ENCODE measurements at regions of chr19 and their contacts with region 1.

Region 1: DNA sequence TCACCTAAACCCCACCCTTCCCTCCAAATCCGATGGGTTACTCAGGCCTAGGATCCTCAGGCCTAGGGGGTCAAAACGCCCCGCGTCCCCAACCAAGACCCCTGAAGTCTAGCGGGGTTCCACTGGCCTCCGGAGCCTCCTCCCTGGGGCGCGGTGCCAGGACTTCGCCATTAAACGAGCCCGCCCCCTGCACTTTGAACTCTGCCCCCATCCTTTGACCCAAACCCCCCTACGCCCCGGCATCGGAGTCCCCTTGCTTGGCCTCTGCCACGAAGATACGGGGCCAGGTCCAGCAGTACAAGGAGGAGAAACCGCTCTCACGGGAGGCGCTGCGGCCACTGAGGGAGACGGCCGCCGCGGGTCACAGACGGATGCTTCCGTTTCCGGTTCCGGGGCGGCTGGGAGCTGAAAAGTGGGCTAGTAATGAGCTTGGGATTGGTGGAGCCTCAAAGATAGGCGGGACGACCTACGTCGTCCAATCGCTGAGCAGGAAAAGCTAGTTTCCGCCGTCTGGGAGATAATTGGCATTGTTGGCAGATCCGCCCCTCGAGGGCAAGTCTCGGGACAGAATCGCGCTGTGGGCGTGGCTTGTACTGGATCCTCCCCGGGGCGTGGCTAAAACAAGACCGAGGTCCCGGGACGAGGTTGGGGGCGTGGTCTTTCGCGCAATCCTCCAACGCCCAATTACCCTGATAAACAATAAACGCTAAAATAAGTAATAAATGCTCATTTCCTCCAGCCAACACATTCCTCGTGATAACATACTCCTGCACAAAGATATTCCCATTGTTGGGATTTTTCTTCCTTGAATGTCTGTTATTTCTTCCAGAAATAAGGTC is 5.7 kb upstream of the ZNF77 start:
- DNase-seq: peak; percentile 100
- ATAC-seq: peak; percentile 97
- H3K4me3 Mint-ChIP-seq: peak overlapping the region; percentile 97
- H3K27ac Mint-ChIP-seq: peak overlapping the region; percentile 93
- H3K4me1 Mint-ChIP-seq: peaks cover 8% of the 10 kb centered on the region
- H3K27me3 Mint-ChIP-seq: no peaks in the 10 kb centered on the region
- CTCF ChIP-seq: no peak

Region 2: GRCh38 chr19:2840794-2841790 is 109.4 kb before region 1 on chr19 and contains the start of gene ZNF555:
- CTCF ChIA-PET with region 1: interaction called, 10 read pairs
- POLR2A ChIA-PET with region 1: interaction called, 4 read pairs
- DNase-seq: peak; percentile 98
- ATAC-seq: peak; percentile 98
- H3K4me3 Mint-ChIP-seq: peak within 1 kb of the TSS; percentile 79
- H3K27ac Mint-ChIP-seq: no peak within 1 kb of the TSS
- H3K4me1 Mint-ChIP-seq: peaks cover 5% of the 10 kb centered on the region
- H3K27me3 Mint-ChIP-seq: peaks cover 8% of the 10 kb centered on the region
- CTCF ChIP-seq: no peak; the same call in 1 of the 2 replicates
- total RNA-seq, gene ZNF555: 6.6 to 7.2 TPM (median 6.6 TPM) in 3 replicates

Region 3: GRCh38 chr19:2962045-2962561 is 11.6 kb after region 1 on chr19:
- CTCF ChIA-PET with region 1: interaction called, 17 read pairs
- POLR2A ChIA-PET with region 1: no interaction called
- DNase-seq: peak; percentile 52
- ATAC-seq: peak; percentile 84
- H3K4me3 Mint-ChIP-seq: no peak overlapping the region
- H3K27ac Mint-ChIP-seq: peak overlapping the region; percentile 92
- H3K4me1 Mint-ChIP-seq: peaks cover 2% of the 10 kb centered on the region; the same call in 1 of the 2 replicates
- H3K27me3 Mint-ChIP-seq: no peaks in the 10 kb centered on the region; the same call in 1 of the 2 replicates
- CTCF ChIP-seq: peak; percentile 83

Region 4: GRCh38 chr19:2986951-2987524 is 36.5 kb after region 1 on chr19:
- CTCF ChIA-PET with region 1: no interaction called
- POLR2A ChIA-PET with region 1: no interaction called
- DNase-seq: peak; percentile 61
- ATAC-seq: peak; percentile 57
- H3K4me3 Mint-ChIP-seq: peak overlapping the region; percentile 54
- H3K27ac Mint-ChIP-seq: no peak overlapping the region
- H3K4me1 Mint-ChIP-seq: peaks cover 27% of the 10 kb centered on the region
- H3K27me3 Mint-ChIP-seq: peaks cover 25% of the 10 kb centered on the region
- CTCF ChIP-seq: no peak

Region 5: DNA sequence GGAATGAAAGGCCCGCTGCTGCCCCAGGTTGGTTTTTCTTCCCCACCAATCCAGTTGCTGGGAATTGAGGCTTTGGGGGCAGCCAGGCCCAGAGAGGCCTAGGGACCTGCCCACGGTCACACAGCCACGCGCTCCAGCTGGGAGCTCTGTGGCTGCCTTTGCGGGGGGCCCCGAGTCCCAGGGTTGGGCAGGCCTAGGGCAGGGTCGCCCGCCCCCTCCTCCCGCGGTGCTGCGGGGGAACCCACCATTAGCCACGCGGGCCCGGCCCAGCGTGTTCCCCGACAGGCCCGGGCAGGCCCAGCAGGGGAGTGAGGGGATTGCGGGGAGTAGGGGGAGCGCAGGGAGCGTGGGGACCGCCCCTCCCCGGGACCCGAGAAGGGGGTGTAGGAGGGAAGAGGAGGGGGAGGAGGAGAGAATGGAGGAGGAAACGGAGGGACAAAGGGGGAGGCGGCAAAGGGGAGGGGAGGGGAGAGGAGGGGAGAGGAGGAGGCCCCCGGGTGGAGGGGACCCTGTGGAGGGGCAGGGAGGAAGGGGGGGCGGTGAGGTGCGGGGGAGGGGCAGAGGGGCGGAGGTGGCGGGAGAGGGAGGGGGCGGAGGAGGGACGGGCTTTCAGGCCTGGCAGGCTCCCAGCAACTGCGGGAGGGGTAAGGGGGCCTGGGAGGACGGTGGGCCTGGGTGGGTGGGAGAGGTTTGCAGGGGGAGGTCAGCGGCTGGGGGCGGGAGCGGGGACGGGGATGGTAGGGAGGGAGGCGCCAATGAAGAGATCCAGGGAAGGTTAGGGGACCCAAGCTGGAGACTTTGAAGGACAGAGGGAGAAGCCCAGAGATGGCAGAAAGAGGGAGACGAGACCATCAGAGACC is 91.5 kb after region 1 on chr19:
- CTCF ChIA-PET with region 1: interaction called, 45 read pairs
- POLR2A ChIA-PET with region 1: no interaction called
- DNase-seq: no peak
- ATAC-seq: no peak; the same call in 1 of the 2 replicates
- H3K4me3 Mint-ChIP-seq: peak overlapping the region; percentile 60
- H3K27ac Mint-ChIP-seq: no peak overlapping the region
- H3K4me1 Mint-ChIP-seq: peaks cover 34% of the 10 kb centered on the region
- H3K27me3 Mint-ChIP-seq: peaks cover 49% of the 10 kb centered on the region
- CTCF ChIP-seq: no peak

Region 6: DNA sequence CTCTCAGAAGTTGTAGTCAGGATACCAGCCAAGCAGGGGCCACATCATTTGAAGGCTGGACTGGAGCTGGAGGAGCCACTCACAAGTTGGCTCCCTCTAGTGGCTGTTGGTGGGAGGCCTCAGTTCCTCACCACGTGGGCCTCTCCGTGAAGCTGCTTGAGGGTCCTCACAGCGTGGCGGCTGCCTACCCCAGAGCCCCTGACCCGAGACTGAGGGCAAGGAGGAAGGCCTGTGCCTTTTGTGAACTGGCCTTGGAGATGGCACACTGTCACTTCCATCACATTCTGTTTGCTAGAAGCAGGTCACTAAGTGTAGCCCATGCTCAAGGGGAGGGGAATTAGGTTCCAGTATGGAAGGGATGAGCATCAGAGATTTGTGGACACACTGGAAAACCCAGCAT is 158.3 kb after region 1 on chr19:
- CTCF ChIA-PET with region 1: interaction called, 60 read pairs
- POLR2A ChIA-PET with region 1: no interaction called
- DNase-seq: peak; percentile 84
- ATAC-seq: peak; percentile 61
- H3K4me3 Mint-ChIP-seq: no peak overlapping the region
- H3K27ac Mint-ChIP-seq: peak overlapping the region; percentile 86
- H3K4me1 Mint-ChIP-seq: peaks cover 24% of the 10 kb centered on the region
- H3K27me3 Mint-ChIP-seq: no peaks in the 10 kb centered on the region
- CTCF ChIP-seq: peak; percentile 72

Region 7: DNA sequence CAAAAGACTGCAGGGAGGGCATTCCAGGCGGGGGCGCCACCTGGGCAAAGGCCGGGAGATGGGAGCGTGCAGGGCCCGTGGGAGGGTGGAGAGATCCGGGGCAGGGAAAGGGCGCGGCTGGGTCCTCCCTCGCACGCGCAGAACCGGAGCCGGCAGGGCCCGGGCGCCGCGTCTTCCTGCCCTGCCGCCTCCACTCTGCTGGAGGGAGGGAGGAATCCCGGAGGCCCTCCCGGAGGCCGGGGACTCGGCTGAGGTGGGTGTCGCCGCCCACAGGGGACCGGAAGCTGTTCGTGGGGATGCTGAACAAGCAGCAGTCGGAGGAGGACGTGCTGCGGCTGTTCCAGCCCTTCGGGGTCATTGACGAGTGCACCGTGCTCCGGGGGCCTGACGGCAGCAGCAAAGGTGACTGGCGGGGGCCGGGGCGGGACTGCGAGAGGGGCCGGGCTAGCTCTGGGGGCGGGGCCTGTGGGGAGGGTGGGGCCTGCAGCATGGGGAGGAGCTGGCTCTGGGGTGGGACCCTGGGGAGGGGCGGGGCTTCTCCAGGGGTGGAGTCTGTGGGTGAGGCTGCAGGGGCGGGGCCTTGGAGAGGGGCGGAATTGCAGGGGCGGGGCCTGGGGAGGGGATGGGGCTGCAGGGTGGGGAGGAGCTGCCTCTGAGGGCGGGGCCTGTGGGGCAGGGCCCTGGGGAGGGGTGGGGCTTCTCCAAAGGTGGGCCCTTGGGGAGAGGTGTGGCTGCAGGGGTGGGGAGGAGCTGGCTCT is 325.3 kb after region 1 on chr19:
- CTCF ChIA-PET with region 1: interaction called, 35 read pairs
- POLR2A ChIA-PET with region 1: no interaction called
- DNase-seq: peak; percentile 98
- ATAC-seq: peak; percentile 78
- H3K4me3 Mint-ChIP-seq: peak overlapping the region; percentile 83
- H3K27ac Mint-ChIP-seq: peak overlapping the region; percentile 49; the same call in 1 of the 2 replicates
- H3K4me1 Mint-ChIP-seq: peaks cover 16% of the 10 kb centered on the region
- H3K27me3 Mint-ChIP-seq: peaks cover 33% of the 10 kb centered on the region
- CTCF ChIP-seq: peak; percentile 76; the same call in 1 of the 2 replicates

Measured in WTC11 (cell line).